K562 (cell line): ENCODE measurements at regions of chr12 and their contacts with region 1.

Region 1: DNA sequence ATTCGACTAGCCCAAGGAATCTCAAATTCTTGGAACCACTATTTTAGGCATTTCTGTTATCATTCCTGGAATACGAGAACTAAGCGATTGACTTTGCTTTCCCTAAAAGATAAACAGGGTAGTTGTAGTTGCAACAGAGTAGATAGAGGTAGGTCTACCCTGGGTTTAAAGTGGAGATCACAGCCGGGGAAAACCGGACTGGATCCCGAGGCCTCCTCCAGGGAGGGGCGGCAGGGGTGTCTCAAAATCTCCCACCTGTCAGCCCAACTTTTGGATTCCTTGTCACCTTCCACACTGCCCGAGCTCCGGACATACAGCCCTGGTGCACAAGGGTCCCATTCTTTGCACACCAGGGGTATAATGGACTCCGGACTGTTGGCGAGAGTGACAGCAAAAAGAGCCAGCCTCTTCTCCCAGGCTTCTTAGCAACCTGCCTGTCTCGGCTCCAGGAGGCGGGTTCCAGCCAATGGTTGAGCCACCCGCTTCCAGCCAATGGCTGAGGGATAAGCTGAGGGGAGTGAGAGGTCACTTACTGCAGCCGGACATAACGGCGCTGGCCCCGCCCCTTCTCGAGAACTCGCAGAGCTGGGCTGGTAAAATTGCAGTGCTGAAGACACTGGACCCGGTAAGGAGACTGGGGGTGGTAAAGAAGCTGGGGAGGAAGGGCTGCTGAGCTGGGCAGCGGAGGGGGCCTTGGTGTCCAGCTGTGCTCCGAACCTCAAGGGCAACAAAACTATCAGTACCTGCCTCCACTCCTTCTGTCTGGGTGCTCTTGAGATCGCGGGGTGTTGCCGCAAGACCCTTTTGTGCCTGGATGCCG is at the start of gene SUOX:
- DNase-seq: peak; percentile 98 to 99 (median 99)
- ATAC-seq: peak; percentile 100
- H3K4me3 ChIP-seq: peak within 1 kb of the TSS; percentile 60
- H3K27ac ChIP-seq: peak within 1 kb of the TSS; percentile 77
- H3K4me1 ChIP-seq: peaks cover 3 to 19% of the 10 kb centered on the region in 2 experiments; a peak in 4 of 5 replicates
- H3K27me3 ChIP-seq: no peaks in the 10 kb centered on the region
- CTCF ChIP-seq: no peak
- EP300 ChIP-seq: peak; percentile 15
- POLR2A ChIP-seq: peak; percentile 83
- RAD21 ChIP-seq: no peak
- polyA plus RNA-seq, gene SUOX: 9.2 to 21.6 TPM

Region 2: GRCh38 chr12:55330446-55330845 is 666.5 kb before region 1 on chr12 and contains the start of gene OR6C3:
- CTCF ChIA-PET with region 1: no interaction called
- POLR2A ChIA-PET with region 1: no interaction called
- in situ Hi-C with region 1: no loop called
- intact Hi-C with region 1: no loop called
- DNase-seq: no peak
- ATAC-seq: no peak
- H3K4me3 ChIP-seq: no peak within 1 kb of the TSS
- H3K27ac ChIP-seq: no peak within 1 kb of the TSS
- H3K4me1 ChIP-seq: no peaks in the 10 kb centered on the region
- H3K27me3 ChIP-seq: no peaks in the 10 kb centered on the region
- CTCF ChIP-seq: no peak
- EP300 ChIP-seq: no peak
- POLR2A ChIP-seq: no peak
- RAD21 ChIP-seq: no peak
- polyA plus RNA-seq, gene OR6C3: not detected

Region 3: GRCh38 chr12:55899082-55899481 is 97.8 kb before region 1 on chr12:
- CTCF ChIA-PET with region 1: no interaction called
- POLR2A ChIA-PET with region 1: no interaction called
- in situ Hi-C with region 1: no loop called
- intact Hi-C with region 1: no loop called
- DNase-seq: peak in 3 of 4 experiments; percentile 25 to 73 (median 60)
- ATAC-seq: peak; percentile 87
- H3K4me3 ChIP-seq: no peak overlapping the region
- H3K27ac ChIP-seq: no peak overlapping the region
- H3K4me1 ChIP-seq: peaks cover 2 to 5% of the 10 kb centered on the region in 2 experiments; a peak in 3 of 5 replicates
- H3K27me3 ChIP-seq: no peaks in the 10 kb centered on the region
- CTCF ChIP-seq: no peak
- EP300 ChIP-seq: no peak
- POLR2A ChIP-seq: no peak
- RAD21 ChIP-seq: no peak

Region 4: DNA sequence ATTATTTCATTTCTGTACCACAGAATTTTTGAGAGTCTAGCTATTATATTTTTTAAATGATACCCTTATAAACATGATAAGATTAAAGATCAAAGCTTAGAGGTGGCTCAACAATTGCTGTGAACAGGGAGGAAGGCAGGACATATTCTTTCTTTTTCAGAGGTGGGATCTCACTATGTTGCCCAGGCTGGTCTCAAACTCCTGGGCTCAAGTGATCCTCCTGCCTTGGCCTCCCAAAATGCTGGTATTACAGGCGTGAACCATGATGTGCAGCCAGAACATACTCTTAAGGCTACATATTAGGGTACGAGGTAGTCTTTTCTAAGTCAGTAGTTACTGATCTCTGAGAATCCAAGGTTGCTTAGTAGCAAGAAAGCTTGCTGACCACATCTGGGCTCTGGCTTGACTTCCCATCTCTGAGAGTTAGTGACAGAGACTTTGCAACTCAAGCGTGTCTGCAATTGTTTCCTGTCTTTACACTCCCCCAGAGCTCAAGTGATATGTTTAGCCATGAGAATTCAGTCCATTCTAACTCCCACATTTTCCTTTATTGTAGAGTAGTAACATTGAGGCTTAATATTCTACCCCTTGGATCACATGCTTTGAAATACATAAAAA is 14.5 kb before region 1 on chr12:
- CTCF ChIA-PET with region 1: no interaction called
- POLR2A ChIA-PET with region 1: interaction called, 15 read pairs
- in situ Hi-C with region 1: no loop called
- intact Hi-C with region 1: no loop called
- DNase-seq: no peak
- ATAC-seq: peak; percentile 52
- H3K4me3 ChIP-seq: no peak overlapping the region
- H3K27ac ChIP-seq: peak overlapping the region; percentile 25; the same call in 1 of the 3 replicates
- H3K4me1 ChIP-seq: peaks cover 9 to 10% of the 10 kb centered on the region in 2 experiments; a peak in 4 of 5 replicates
- H3K27me3 ChIP-seq: no peaks in the 10 kb centered on the region
- CTCF ChIP-seq: no peak
- EP300 ChIP-seq: no peak
- POLR2A ChIP-seq: no peak
- RAD21 ChIP-seq: no peak

Region 5: GRCh38 chr12:56020423-56021184 is 23.7 kb after region 1 on chr12 and contains the start of gene IKZF4:
- CTCF ChIA-PET with region 1: no interaction called
- POLR2A ChIA-PET with region 1: interaction called, 19 read pairs
- in situ Hi-C with region 1: no loop called
- intact Hi-C with region 1: loop called (anchors 1 kb)
- DNase-seq: peak; percentile 76 to 95 (median 81)
- ATAC-seq: peak; percentile 79
- H3K4me3 ChIP-seq: peak within 1 kb of the TSS; percentile 46
- H3K27ac ChIP-seq: peak within 1 kb of the TSS; percentile 82
- H3K4me1 ChIP-seq: peaks cover 27 to 41% of the 10 kb centered on the region in 2 experiments
- H3K27me3 ChIP-seq: no peaks in the 10 kb centered on the region
- CTCF ChIP-seq: no peak
- EP300 ChIP-seq: no peak; the same call in 1 of the 2 replicates
- POLR2A ChIP-seq: no peak; the same call in 1 of the 2 replicates
- RAD21 ChIP-seq: 0 out of 4 replicates have a peak, but pooled peaks of 1 of the 2 experiments have one; percentile 7
- polyA plus RNA-seq, gene IKZF4: 2.8 to 3.6 TPM

Region 6: DNA sequence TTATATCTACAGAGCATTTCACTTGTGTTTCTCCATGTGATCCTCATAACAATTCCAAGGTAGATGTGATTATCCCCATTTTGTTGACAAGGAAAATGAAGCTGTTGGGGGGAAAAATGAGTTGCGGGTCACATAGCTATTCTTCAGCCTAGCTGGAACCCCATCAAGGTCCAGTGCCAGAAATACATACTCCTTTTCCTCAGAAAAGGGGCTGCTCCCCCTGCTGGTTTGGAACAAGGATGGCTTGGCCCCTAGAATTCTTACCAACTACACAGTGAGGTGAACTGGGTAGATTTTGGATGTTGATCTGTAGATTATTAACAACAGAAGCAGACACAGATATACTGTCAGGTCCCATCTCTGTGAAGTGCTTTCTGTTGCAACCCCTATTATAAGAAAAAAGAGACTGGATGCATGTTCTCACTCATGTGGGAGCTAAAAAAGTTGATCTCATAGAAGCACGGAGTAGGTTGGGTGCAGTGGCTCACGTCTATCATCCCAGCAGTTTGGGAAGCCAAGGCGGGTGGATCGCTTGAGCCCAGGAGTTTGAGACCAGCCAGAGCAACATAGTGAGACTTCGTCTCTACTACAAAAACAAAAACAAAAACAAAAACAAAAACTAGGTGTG is 32.9 kb after region 1 on chr12:
- CTCF ChIA-PET with region 1: interaction called, 35 read pairs
- POLR2A ChIA-PET with region 1: interaction called, 9 read pairs
- in situ Hi-C with region 1: loop called (anchors 5 kb)
- intact Hi-C with region 1: loop called (anchors 1 kb)
- DNase-seq: peak; percentile 56 to 75 (median 65)
- ATAC-seq: peak; percentile 97
- H3K4me3 ChIP-seq: no peak overlapping the region
- H3K27ac ChIP-seq: no peak overlapping the region
- H3K4me1 ChIP-seq: peaks cover 0 to 6% of the 10 kb centered on the region in 2 experiments; a peak in 1 of 5 replicates
- H3K27me3 ChIP-seq: no peaks in the 10 kb centered on the region
- CTCF ChIP-seq: peak; percentile 71 to 74 (median 73)
- EP300 ChIP-seq: no peak
- POLR2A ChIP-seq: no peak
- RAD21 ChIP-seq: peak; percentile 77 to 87